ENCODE measurements at regions of chrX and their contacts with region 1.

Region 1: GRCh38 chrX:48801280-48802088 is at the start of gene HDAC6:
- DNase-seq: peak; percentile 98
- H3K4me3 Mint-ChIP-seq: peak within 1 kb of the TSS; percentile 96
- H3K27ac Mint-ChIP-seq: peak within 1 kb of the TSS; percentile 96
- H3K4me1 Mint-ChIP-seq: peaks cover 16% of the 10 kb centered on the region
- H3K27me3 Mint-ChIP-seq: no peaks in the 10 kb centered on the region
- total RNA-seq, gene HDAC6: 50.6 and 55.2 TPM in 2 replicates

Region 2: DNA sequence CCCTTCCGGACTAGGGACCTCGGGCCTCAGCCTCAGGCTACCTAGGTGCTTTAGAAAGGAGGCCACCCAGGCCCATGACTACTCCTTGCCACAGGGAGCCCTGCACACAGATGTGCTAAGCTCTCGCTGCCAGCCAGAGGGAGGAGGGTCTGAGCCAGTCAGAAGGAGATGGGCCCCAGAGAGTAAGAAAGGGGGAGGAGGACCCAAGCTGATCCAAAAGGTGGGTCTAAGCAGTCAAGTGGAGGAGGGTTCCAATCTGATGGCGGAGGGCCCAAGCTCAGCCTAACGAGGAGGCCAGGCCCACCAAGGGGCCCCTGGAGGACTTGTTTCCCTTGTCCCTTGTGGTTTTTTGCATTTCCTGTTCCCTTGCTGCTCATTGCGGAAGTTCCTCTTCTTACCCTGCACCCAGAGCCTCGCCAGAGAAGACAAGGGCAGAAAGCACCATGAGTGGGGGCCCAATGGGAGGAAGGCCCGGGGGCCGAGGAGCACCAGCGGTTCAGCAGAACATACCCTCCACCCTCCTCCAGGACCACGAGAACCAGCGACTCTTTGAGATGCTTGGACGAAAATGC is 118.0 kb before region 1 on chrX and contains the start of gene WAS:
- intact Hi-C with region 1: loop called (anchors 5 kb)
- DNase-seq: peak; percentile 85
- H3K4me3 Mint-ChIP-seq: peak within 1 kb of the TSS; percentile 98
- H3K27ac Mint-ChIP-seq: peak within 1 kb of the TSS; percentile 98
- H3K4me1 Mint-ChIP-seq: peaks cover 43% of the 10 kb centered on the region
- H3K27me3 Mint-ChIP-seq: no peaks in the 10 kb centered on the region
- total RNA-seq, gene WAS: 99.0 and 104 TPM in 2 replicates

Region 3: DNA sequence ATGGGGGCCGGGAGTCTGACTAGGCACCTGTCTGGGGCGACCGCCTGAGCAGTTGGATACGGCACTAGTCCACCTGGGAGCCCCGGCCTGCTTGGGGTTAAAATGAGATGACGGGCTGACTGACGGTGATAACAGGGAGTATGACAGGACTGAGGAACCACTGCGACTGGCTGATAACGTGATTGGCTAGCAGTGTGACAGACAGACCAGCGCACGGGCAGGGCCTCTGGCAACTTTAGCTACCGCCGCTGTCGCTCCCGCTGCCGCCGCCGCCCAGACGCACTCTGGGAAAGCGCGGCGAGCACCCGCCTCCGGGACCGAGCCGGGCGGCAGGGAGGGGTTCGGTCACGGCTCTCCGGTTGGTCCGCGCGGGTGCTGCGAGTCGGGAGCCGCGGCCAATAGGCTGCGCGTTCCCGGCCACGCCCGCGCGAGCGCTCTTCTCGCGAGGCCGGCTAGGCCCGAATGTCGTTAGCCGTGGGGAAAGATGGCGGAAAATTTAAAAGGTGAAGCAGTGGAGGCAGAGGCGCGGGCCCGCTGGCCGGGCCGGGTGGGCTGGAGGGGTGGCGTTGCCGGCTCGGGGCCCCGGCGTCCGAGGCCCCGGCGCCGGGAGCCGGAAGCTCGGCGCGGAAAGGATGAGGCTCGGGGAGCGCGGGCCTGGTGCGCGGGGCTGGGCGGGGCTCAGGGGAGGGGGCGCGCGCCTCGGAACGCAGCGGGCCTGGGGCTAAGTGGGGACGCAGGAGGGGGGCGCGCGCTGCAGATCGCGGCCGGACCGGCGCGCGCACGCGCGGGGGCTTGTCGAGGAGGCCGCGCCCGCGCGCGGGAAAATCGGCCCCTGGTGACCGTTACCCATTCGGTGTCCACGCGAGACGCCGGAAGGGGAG is 104.9 kb before region 1 on chrX and contains the start of gene SUV39H1:
- intact Hi-C with region 1: loop called (anchors 1 kb)
- DNase-seq: peak; percentile 96
- H3K4me3 Mint-ChIP-seq: peak within 1 kb of the TSS; percentile 93
- H3K27ac Mint-ChIP-seq: peak within 1 kb of the TSS; percentile 98
- H3K4me1 Mint-ChIP-seq: peaks cover 28% of the 10 kb centered on the region
- H3K27me3 Mint-ChIP-seq: no peaks in the 10 kb centered on the region
- total RNA-seq, gene SUV39H1: 27.6 and 32.2 TPM in 2 replicates

Region 4: GRCh38 chrX:48786341-48786800 is 15.1 kb before region 1 on chrX and contains the start of gene GATA1:
- intact Hi-C with region 1: no loop called
- DNase-seq: no peak
- H3K4me3 Mint-ChIP-seq: no peak within 1 kb of the TSS
- H3K27ac Mint-ChIP-seq: no peak within 1 kb of the TSS
- H3K4me1 Mint-ChIP-seq: peaks cover 11% of the 10 kb centered on the region
- H3K27me3 Mint-ChIP-seq: peaks cover 13% of the 10 kb centered on the region
- total RNA-seq, gene GATA1: not detected in 2 replicates

Region 5: GRCh38 chrX:48848847-48849246 is 47.4 kb after region 1 on chrX:
- intact Hi-C with region 1: no loop called
- DNase-seq: no peak
- H3K4me3 Mint-ChIP-seq: no peak overlapping the region
- H3K27ac Mint-ChIP-seq: no peak overlapping the region
- H3K4me1 Mint-ChIP-seq: peaks cover 5% of the 10 kb centered on the region
- H3K27me3 Mint-ChIP-seq: peaks cover 5% of the 10 kb centered on the region

Region 6: DNA sequence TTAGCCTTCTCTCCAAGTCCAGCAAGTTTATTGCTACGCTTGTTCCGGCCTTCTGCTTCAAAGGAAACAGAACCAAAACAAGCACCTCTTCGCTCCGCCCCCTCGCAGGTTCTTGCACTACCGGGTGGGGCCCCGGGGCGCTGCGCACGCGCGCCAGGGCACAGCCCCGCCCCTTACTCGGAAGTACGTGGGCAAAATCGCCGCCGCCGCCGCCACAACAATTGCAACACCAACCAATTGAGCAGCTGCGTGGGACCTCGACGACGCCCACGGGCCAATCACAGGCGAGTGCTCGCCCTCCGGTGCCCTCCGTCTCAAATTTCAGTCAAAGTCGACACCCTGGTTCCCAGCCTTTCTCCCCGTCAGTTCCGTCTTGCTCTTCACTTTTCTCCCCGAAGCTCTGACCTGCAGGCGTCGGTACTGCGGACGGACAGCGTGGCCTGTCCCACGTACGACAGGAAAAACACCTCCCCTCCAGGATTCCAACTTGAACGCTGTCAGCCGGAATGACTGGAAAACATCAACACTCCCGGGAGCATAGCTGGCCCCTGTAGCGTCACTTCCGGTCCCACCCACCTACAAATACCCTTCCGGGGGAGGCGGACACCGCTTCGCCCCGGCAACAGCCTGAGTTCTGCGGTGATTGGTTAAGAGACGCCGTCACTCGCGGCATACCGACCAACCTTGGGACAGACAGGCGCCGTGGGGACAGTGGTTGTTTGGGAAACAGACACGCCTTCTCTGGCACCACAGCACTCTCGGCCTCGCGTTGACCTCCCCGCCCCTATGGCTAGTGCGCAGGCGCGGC is 156.5 kb after region 1 on chrX:
- intact Hi-C with region 1: loop called (anchors 5 kb)
- DNase-seq: peak; percentile 97
- H3K4me3 Mint-ChIP-seq: peak overlapping the region; percentile 98
- H3K27ac Mint-ChIP-seq: peak overlapping the region; percentile 100
- H3K4me1 Mint-ChIP-seq: peaks cover 36% of the 10 kb centered on the region
- H3K27me3 Mint-ChIP-seq: no peaks in the 10 kb centered on the region

Region 7: DNA sequence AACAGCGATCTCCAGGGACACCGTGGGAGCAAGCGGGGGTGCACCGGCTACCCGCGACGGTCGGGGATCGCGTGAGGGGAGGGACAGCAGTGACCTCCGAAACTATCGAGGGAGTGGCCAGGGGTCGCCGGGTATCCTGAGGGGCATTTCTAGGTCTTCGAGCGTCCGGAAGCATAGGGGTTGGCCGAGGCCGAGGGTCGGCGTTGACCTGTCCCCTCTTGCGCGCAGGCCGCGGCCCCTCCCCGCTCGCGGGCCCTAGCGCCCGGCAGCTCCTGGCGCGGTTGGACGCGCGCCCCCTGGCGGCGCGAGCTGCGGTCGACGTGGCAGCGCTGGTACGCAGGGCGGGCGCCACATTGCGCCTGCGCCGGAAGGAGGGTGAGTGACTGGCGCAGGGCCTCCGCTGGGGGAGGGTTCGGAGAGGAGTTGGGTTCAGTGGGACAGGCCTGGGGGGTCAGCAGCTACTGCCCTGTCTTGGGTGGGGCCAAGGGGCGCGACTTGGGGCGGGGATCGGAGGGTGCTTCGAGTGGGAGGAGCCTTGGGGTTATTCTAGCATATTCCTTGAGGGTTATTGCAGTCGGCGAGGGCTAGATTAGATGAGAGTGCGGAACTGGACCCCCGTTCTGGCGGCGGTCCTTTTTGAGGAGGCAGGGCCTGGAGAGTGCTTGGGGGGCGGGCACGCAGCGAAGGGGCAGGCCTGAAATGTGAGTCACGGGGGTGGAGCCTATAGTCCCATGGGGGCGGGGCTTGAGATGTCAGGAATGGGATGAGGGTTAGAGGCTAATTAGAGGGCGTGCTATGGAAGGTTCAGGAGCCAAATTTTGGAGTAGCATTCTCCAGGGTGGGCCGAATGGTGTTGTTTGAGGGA is 362.3 kb after region 1 on chrX:
- intact Hi-C with region 1: loop called (anchors 10 kb)
- DNase-seq: peak; percentile 95
- H3K4me3 Mint-ChIP-seq: peak overlapping the region; percentile 87
- H3K27ac Mint-ChIP-seq: peak overlapping the region; percentile 94
- H3K4me1 Mint-ChIP-seq: peaks cover 26% of the 10 kb centered on the region
- H3K27me3 Mint-ChIP-seq: peaks cover 2% of the 10 kb centered on the region